WTC11 (cell line): ENCODE measurements at regions of chr17 and their contacts with region 1.

Region 1: GRCh38 chr17:40355123-40355803 is 9.3 kb downstream of the GJD3 start:
- DNase-seq: peak; percentile 96
- ATAC-seq: peak; percentile 87
- H3K4me3 Mint-ChIP-seq: no peak overlapping the region
- H3K27ac Mint-ChIP-seq: no peak overlapping the region; the same call in 1 of the 2 replicates
- H3K4me1 Mint-ChIP-seq: peaks cover 48% of the 10 kb centered on the region
- H3K27me3 Mint-ChIP-seq: peaks cover 3% of the 10 kb centered on the region
- CTCF ChIP-seq: peak; percentile 98

Region 2: DNA sequence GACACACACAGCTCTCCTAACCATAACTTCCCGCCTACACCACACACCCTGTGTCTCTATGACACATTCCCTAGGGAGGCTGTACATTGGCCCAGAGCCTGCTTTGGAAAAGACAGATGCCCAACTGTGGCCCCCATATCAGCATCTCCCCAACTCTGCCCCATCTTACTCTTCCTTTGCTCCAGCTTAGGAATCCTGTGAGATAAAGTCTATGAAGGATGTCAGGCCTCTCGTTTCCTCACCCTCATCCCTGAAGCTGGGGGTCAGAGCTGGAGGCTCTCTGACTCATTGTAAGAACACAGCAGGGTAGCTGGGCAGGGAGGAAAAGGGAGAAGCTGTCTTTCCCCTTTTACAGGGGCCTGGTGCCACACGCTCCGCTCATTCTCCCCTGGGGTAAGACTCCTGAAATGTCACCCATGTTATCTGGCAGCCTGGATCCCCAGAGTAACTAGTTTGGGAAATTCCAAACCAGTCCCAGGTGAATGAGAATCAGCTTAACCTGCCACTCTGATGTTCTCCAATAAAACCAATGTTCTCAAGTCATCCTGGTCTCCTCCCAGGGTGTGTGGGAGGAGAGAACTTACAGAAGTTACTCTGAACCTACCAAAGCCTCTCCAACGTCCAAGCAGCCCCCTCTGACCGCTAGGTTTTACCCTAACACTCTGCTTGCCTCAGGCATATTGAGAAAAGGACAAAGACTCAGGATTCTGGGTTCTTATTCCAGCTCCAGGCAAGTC is 175.2 kb before region 1 on chr17:
- CTCF ChIA-PET with region 1: no interaction called
- POLR2A ChIA-PET with region 1: no interaction called
- DNase-seq: no peak
- ATAC-seq: no peak
- H3K4me3 Mint-ChIP-seq: no peak overlapping the region
- H3K27ac Mint-ChIP-seq: no peak overlapping the region
- H3K4me1 Mint-ChIP-seq: peaks cover 20% of the 10 kb centered on the region
- H3K27me3 Mint-ChIP-seq: no peaks in the 10 kb centered on the region
- CTCF ChIP-seq: no peak

Region 3: GRCh38 chr17:40287494-40288369 is 67.5 kb before region 1 on chr17 and contains the start of gene CDC6:
- CTCF ChIA-PET with region 1: interaction called, 82 read pairs
- POLR2A ChIA-PET with region 1: interaction called, 7 read pairs
- DNase-seq: peak; percentile 98
- ATAC-seq: peak; percentile 97
- H3K4me3 Mint-ChIP-seq: peak within 1 kb of the TSS; percentile 98
- H3K27ac Mint-ChIP-seq: peak within 1 kb of the TSS; percentile 98
- H3K4me1 Mint-ChIP-seq: peaks cover 14% of the 10 kb centered on the region
- H3K27me3 Mint-ChIP-seq: no peaks in the 10 kb centered on the region
- CTCF ChIP-seq: no peak
- total RNA-seq, gene CDC6: 85.9 to 125 TPM (median 87.9 TPM) in 3 replicates

Region 4: DNA sequence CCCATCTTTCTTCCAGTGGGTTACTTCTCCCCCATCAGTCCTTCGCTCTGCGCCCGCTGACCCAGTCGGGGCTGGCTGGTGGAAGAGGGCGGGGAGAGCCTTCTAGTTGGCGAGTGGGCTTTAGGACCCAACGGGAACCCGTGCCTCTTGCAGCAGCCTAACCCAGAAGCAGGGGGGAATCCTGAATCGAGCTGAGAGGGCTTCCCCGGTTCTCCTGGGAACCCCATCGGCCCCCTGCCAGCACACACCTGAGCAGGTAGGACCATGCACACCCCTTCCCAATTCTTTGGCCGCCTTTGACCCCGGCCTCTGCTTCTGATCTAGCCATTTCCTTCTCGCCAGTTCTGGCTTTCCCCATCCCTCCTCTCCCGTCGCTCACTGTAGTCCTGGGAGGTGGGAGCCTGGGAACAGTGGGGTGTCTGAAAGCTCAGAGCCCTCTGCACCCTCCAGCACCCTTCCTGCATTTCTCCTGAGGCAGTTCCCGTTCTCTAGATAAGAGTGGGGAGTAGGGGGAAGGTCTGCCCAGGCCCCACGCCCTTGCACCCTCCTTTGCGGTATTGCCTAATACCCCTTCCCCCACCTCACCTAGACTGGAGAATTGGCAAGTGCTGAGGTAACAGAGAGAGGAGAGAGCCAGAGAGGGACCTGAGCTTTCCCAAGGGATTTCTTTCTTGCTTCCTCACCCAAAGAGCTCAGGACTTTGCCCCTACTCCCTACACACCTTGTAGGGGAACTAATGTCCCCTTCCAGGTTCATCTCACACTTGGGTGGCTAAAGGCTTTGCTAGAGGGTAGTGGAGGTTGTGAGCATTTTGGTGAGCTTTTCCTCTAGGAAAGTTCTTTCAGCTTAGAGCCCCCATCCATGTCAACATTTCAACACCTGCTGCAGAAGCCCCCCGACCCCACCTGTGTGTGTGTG is 46.0 kb before region 1 on chr17 and contains the start of gene RARA:
- CTCF ChIA-PET with region 1: interaction called, 259 read pairs
- POLR2A ChIA-PET with region 1: interaction called, 14 read pairs
- DNase-seq: peak; percentile 83
- ATAC-seq: peak; percentile 77
- H3K4me3 Mint-ChIP-seq: no peak within 1 kb of the TSS
- H3K27ac Mint-ChIP-seq: no peak within 1 kb of the TSS
- H3K4me1 Mint-ChIP-seq: peaks cover 40% of the 10 kb centered on the region
- H3K27me3 Mint-ChIP-seq: no peaks in the 10 kb centered on the region
- CTCF ChIP-seq: no peak
- total RNA-seq, gene RARA: 14.3 to 20.7 TPM (median 15.8 TPM) in 3 replicates

Region 5: DNA sequence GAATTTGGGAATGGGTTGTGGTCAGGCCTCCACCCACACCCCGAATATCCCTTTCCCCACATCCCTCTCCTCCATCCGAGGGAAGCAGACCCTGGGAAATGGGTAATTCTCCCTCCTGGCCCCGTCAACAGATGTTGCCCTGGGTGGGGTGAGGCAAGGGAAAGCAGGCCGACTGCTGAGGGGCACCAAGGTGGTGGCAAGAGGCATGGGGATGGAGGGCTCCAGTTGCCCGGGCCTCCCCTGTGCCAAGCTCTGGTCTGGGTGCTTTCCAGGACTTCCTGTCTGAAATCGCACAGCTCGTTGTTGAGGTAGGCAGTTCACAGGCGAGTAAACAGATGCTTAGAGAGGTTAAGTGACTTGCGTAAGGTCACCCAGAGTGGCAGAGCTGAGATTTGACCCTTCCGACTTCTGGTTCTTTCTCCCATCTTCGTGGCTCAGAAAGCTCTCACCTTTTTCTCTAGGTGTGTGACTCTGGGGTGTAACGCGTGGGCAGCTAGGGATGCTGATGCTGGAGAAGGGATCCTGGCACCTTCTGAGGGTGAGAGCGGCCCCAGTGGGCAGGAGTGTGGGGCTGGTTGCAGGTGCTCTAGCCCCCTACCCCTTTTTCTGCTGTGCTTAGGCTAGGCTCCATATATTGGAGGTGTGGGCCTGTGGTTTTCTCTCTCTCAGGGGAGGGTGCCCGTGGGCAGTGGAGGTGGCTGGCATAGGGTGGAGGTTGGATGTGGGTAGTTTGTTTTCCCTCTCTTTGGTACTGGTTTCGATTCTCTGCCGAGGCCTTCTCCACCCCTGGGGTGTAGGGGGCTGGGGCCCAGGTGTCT is 29.0 kb before region 1 on chr17:
- CTCF ChIA-PET with region 1: interaction called, 22 read pairs
- POLR2A ChIA-PET with region 1: interaction called, 3 read pairs
- DNase-seq: no peak
- ATAC-seq: no peak
- H3K4me3 Mint-ChIP-seq: no peak overlapping the region
- H3K27ac Mint-ChIP-seq: no peak overlapping the region
- H3K4me1 Mint-ChIP-seq: peaks cover 31% of the 10 kb centered on the region
- H3K27me3 Mint-ChIP-seq: no peaks in the 10 kb centered on the region
- CTCF ChIP-seq: no peak

Region 6: DNA sequence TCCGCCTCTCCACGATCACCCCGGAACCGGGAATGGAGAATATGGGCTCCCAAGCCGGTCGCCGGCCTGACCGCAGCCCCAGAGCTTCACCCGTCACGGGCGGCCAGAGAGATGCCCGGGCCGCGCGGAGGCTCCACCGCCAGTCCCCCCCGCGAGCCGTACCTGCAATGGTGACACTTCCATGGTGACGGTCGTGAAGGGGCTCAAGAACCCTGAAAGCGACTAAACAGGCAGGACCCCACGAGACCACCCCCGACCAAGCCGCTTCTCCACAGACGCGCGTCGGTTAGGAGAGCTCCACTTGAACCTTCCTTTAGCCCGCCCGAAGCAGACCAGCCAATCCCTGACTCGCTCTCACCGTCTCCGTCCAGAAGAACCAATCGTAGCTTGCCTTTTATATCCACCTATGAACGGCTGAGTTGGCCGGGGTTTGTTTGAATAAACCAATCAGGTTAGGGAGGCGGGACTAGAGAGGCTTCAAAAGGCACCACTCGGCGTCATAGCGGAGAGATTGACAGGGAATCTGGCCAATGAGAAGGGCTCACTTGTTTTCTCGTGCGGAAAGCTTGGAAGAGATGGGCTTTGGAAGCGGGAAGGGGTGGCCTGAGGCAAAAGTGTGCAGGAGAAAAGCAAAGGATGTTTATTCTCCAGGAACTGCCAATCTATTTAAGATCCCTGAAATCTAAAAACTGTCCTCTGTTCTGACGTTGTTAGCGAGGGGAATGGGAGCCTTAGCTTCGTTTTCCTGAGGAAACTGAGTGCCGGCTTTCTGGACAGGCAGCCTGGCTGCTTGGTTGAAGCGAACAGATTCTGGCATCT is 62.6 kb after region 1 on chr17 and contains the start of gene TOP2A:
- CTCF ChIA-PET with region 1: interaction called, 12 read pairs
- POLR2A ChIA-PET with region 1: no interaction called
- DNase-seq: peak; percentile 97
- ATAC-seq: peak; percentile 95
- H3K4me3 Mint-ChIP-seq: peak within 1 kb of the TSS; percentile 97
- H3K27ac Mint-ChIP-seq: peak within 1 kb of the TSS; percentile 84
- H3K4me1 Mint-ChIP-seq: peaks cover 49% of the 10 kb centered on the region
- H3K27me3 Mint-ChIP-seq: no peaks in the 10 kb centered on the region; the same call in 1 of the 2 replicates
- CTCF ChIP-seq: no peak
- total RNA-seq, gene TOP2A: 273 to 307 TPM (median 292 TPM) in 3 replicates

Region 7: DNA sequence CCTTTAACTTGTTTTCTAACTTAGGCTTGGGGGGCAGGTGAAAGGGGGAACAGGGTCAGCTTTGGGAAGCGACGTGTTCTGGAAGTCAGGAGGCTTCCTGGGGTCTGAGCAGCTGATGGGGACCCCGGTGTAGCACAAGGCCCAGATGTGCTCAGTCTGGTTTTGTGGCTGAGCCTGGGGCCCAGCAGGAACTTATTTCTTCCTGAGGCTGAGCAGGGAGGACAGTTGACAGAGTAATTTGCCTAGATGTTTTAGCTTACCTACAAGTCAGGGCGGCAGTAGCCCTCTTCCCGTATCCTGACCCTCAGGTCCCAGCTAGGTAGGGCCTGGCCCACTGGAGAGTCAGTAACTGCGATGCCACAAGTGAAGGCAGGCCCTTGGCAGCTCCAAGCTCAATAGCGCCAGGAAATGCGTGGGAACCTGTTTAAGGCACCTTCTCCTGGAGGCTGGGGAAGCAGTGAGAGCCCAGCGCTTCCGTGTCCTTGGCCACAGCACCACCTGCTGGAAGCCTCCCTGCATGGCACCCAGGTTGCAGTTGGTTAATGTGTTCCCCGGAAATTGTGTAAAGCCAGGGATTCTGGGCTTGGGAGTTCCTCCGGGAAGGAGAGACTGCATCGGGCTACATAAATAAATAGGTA is 204.8 kb after region 1 on chr17:
- CTCF ChIA-PET with region 1: interaction called, 22 read pairs
- POLR2A ChIA-PET with region 1: no interaction called
- DNase-seq: peak; percentile 93
- ATAC-seq: peak; percentile 83
- H3K4me3 Mint-ChIP-seq: no peak overlapping the region
- H3K27ac Mint-ChIP-seq: no peak overlapping the region
- H3K4me1 Mint-ChIP-seq: peaks cover 42% of the 10 kb centered on the region
- H3K27me3 Mint-ChIP-seq: peaks cover 5% of the 10 kb centered on the region
- CTCF ChIP-seq: peak; percentile 96